Posterior vena cava (tissue), 2 donors: ENCODE measurements at regions of chr5 and their contacts with region 1.

Region 1: GRCh38 chr5:38039826-38040225 is 200.0 kb upstream of the GDNF start:
- DNase-seq: no peak

Region 2: DNA sequence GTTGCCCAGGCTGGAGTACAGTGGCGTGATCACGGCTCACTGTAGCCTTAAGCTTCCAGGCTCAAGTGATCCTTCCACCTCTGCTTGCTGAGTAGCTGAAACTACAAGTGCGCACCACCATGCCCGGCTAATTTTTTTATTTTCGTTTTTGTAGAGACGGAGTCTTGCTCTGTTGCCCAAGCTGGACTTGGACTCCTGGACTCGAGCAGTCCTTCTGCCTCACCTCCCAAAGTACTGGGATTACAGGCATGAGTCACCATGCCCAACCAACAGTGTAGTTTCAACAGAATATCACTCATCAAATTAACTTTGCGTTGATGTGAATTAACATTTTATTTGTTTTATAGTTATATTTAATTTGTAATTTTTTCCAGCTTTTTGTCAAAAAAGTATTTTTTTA is 615.4 kb before region 1 on chr5:
- intact Hi-C with region 1: no loop called
- DNase-seq: no peak

Region 3: DNA sequence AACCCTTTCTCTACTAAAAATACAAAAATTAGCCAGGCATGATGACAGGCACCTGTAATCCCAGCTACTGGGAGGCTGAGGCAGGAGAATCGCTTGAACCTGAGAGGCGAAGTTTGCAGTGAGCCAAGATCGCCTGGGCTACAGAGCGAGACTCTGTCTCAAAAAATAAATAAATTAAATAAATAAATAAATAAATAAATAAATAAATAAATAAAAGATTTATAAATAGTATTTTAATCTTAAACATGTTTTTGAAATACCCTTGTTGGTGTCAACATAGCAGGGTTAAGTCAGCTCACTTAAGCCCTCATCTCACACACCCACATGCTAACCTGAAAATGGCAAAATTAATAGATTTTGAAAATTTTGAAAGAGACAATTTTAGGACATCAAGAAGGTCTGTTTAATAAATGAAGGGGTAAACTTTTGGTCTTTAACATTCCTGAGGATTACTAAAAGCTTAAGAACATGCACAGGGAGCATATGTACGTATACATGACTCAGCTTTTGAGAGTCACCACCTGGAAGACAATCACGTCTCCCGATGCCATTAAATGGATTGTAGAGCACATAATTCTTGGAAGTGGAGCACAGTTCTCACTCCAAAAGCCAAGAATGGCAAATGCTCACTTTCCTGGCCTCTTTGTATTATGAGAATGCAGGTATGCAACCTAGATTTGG is 402.5 kb before region 1 on chr5:
- intact Hi-C with region 1: loop called in 1 of 2 experiments (anchors 5 kb)
- DNase-seq: no peak

Region 4: GRCh38 chr5:38094889-38095288 is 55.1 kb after region 1 on chr5:
- intact Hi-C with region 1: no loop called
- DNase-seq: no peak

Region 5: DNA sequence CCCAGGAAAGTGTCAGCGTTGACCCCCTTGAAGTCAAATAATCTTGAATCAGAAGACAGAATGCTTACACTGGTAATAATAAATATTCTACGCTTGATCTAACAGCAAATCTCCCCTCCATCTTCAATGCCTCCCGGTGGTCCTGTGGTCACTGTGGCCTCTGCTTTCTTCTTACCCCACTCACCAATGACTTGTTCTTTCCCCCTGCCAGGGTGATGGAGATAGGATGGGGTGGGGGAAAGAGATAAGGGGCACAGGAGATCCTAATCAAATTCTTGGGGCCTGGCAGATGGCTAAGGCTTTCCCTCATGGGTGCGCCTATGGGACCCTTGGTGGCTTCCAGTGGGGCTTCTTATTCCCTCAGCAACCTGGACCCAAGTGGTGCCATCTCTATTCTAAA is 66.0 kb after region 1 on chr5:
- intact Hi-C with region 1: loop called in 1 of 2 experiments (anchors 2 kb)
- DNase-seq: no peak